Ascending aorta (tissue), 2 donors: ENCODE measurements at regions of chr20 and their contacts with region 1.

Region 1: GRCh38 chr20:35619196-35620095 is 3.8 kb downstream of the SPAG4 start:
- DNase-seq: peak in 1 of 2 donors; percentile 87
- H3K4me3 ChIP-seq: peak overlapping the region; percentile 60 to 61
- H3K27ac ChIP-seq: peak overlapping the region; percentile 71 to 75
- H3K4me1 ChIP-seq: peaks cover 5 to 16% of the 10 kb centered on the region in 2 donors
- H3K27me3 ChIP-seq: no peaks in the 10 kb centered on the region
- CTCF ChIP-seq: peak in 2 of 3 experiments; percentile 12 to 31

Region 2: GRCh38 chr20:35541783-35542588 is 77.5 kb before region 1 on chr20 and contains the start of gene ERGIC3:
- intact Hi-C with region 1: loop called (anchors 2 kb)
- DNase-seq: peak; percentile 86 to 98
- H3K4me3 ChIP-seq: peak within 1 kb of the TSS; percentile 75 to 85
- H3K27ac ChIP-seq: peak within 1 kb of the TSS; percentile 42 to 72
- H3K4me1 ChIP-seq: peaks cover 0 to 12% of the 10 kb centered on the region in 2 donors
- H3K27me3 ChIP-seq: no peaks in the 10 kb centered on the region
- CTCF ChIP-seq: peak in 1 of 3 experiments; percentile 7
- total RNA-seq, gene ERGIC3: 67.7 TPM

Region 3: DNA sequence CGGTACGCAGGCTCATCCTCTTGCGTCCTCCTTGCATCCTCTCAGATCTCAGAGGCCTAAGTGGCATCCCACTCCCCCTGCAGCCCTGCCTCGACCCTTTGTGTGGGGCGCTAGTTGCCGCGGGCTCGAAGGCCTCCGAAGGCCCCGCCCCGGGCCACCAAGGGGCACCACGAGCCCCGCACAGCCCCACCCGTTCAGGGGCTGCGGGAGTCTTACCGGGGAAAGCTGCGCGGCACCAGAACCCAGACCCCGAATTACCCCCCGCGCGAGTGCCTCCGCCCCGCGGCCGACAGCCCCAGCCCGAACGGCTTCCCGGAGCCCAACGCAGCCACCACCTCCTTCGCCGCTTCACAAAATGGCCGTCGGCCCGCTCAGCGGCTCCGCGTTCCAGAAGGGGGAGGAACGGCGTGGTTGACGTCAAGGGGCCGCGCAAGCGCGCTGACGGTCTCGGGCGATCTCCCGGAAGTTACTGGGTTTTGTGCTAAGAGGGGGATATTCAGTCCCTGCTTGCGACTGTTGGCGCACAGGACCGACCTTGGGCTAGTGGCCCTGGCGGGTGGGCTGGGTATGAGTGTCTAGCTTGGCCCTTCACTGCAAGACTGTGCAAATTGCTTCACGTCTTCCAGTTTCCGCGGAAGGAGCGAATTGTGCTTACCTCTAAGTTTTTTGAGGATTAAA is 45.2 kb after region 1 on chr20 and contains the starts of genes CPNE1 and RBM12:
- intact Hi-C with region 1: loop called (anchors 1 kb)
- DNase-seq: peak; percentile 61 to 95
- H3K4me3 ChIP-seq: peak within 1 kb of the TSS; percentile 91 to 96
- H3K27ac ChIP-seq: peak within 1 kb of the TSS; percentile 97 to 98
- H3K4me1 ChIP-seq: peaks cover 2 to 23% of the 10 kb centered on the region in 2 donors
- H3K27me3 ChIP-seq: no peaks in the 10 kb centered on the region
- CTCF ChIP-seq: peak in 2 of 3 experiments; percentile 7 to 14
- total RNA-seq, gene CPNE1: 208 TPM
- total RNA-seq, gene RBM12: 8.9 TPM

Region 4: GRCh38 chr20:35771689-35772562 is 152.5 kb after region 1 on chr20 and contains the start of gene PHF20:
- intact Hi-C with region 1: loop called (anchors 1 kb)
- DNase-seq: peak; percentile 96 to 100
- H3K4me3 ChIP-seq: peak within 1 kb of the TSS; percentile 85
- H3K27ac ChIP-seq: peak within 1 kb of the TSS; percentile 96 to 98
- H3K4me1 ChIP-seq: peaks cover 0 to 30% of the 10 kb centered on the region in 2 donors
- H3K27me3 ChIP-seq: no peaks in the 10 kb centered on the region
- CTCF ChIP-seq: peak in 1 of 3 experiments; percentile 60
- total RNA-seq, gene PHF20: 109 TPM

Region 5: GRCh38 chr20:35954200-35954906 is 334.9 kb after region 1 on chr20 and contains the start of gene SCAND1:
- intact Hi-C with region 1: loop called (anchors 5 kb)
- DNase-seq: peak; percentile 72 to 96
- H3K4me3 ChIP-seq: peak within 1 kb of the TSS; percentile 94
- H3K27ac ChIP-seq: peak within 1 kb of the TSS; percentile 98 to 99
- H3K4me1 ChIP-seq: peaks cover 0 to 16% of the 10 kb centered on the region in 2 donors
- H3K27me3 ChIP-seq: no peaks in the 10 kb centered on the region
- CTCF ChIP-seq: peak; percentile 96 to 98 (median 97)
- total RNA-seq, gene SCAND1: 146 TPM